H1 (cell line): ENCODE measurements at regions of chr17 and their contacts with region 1.

Region 1: GRCh38 chr17:63478791-63479494 is 2.1 kb downstream of the ACE start:
- DNase-seq: peak; percentile 65 to 91
- H3K4me3 ChIP-seq: no peak overlapping the region
- H3K27ac ChIP-seq: no peak overlapping the region
- H3K4me1 ChIP-seq: peaks cover 0 to 22% (median 17%) of the 10 kb centered on the region in 4 experiments; a peak in 6 of 7 replicates
- H3K27me3 ChIP-seq: peaks cover 0 to 27% (median 18%) of the 10 kb centered on the region in 4 experiments; a peak in 5 of 7 replicates
- CTCF ChIP-seq: peak; percentile 96 to 99 (median 98)
- EP300 ChIP-seq: no peak
- POLR2A ChIP-seq: no peak
- RAD21 ChIP-seq: peak; percentile 79 to 88

Region 2: DNA sequence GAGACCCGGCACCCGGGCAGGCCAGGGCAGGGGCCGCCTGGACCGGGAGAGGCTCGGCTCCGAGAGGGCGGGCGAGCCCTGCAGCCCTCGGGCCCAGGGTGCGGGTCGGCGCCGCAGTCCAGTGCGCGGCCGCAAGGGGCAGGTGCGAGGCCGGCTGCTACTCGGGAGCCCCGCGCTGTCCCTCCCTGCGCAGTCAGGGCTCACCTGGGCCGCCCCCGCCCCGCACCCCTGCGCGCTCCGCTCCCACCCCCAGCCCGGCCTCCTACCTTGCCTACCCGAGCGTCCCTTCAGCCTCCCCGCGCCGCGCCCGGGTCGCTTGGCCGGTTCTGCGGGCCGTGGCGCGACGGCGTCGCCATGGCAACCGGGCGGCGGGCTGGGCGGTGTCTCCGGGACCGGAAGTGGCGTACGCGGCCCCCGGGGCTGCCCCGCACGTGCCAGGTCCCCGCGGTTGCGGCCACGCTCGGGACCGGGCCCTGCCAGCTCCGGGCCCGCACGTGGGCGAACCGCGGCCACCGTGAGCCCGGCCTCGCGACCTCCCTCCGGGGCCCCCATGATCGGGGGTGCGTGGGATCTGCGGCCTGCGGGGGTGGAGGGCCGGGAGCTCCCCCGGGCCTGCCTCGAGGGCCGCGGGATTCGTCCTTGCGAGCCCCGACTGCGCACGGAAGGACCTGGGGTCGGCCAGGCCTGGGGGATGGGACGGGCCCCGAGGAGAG is 32.8 kb before region 1 on chr17 and contains the start of gene CYB561:
- CTCF ChIA-PET with region 1: interaction called, 758 read pairs
- POLR2A ChIA-PET with region 1: interaction called, 24 read pairs
- DNase-seq: peak in 1 of 2 experiments; percentile 92
- H3K4me3 ChIP-seq: peak within 1 kb of the TSS; percentile 49 to 74 (median 55)
- H3K27ac ChIP-seq: no peak within 1 kb of the TSS; the same call in 1 of the 2 replicates
- H3K4me1 ChIP-seq: peaks cover 0 to 20% (median 10%) of the 10 kb centered on the region in 4 experiments; a peak in 6 of 7 replicates
- H3K27me3 ChIP-seq: peaks cover 0 to 10% (median 2%) of the 10 kb centered on the region in 4 experiments; a peak in 2 of 7 replicates
- CTCF ChIP-seq: peak; percentile 56 to 86 (median 68)
- EP300 ChIP-seq: no peak
- POLR2A ChIP-seq: peak in 1 of 2 experiments; percentile 37; a peak in 1 of 3 replicates
- RAD21 ChIP-seq: peak; percentile 20 to 39; a peak in 2 of 4 replicates
- total RNA-seq, gene CYB561: 23.4 and 26.0 TPM in 2 replicates

Region 3: DNA sequence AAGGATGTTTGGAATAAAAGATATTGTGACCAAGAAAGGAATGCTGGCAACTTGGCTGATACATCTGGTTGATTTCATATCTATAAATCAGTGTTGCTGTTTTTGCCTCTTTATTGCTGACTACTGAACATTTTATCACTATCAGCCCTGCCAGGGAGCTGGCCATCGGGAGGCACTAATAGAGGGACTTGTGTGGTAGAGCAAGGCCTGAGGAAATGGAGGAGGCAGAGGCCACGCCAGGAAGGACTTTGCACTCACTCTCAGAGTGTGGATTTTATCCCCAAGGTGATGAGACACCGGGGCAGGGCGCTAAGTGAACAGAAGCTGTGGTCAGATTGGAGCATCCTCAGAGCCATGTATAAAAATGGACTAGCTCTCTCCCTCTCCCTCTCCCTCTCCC is 23.5 kb before region 1 on chr17:
- CTCF ChIA-PET with region 1: interaction called, 758 read pairs
- POLR2A ChIA-PET with region 1: no interaction called
- DNase-seq: no peak
- H3K4me3 ChIP-seq: no peak overlapping the region
- H3K27ac ChIP-seq: no peak overlapping the region
- H3K4me1 ChIP-seq: peaks cover 0 to 3% (median 0%) of the 10 kb centered on the region in 4 experiments; a peak in 1 of 7 replicates
- H3K27me3 ChIP-seq: no peaks in the 10 kb centered on the region; a peak in 1 of 7 replicates
- CTCF ChIP-seq: no peak
- EP300 ChIP-seq: no peak
- POLR2A ChIP-seq: no peak
- RAD21 ChIP-seq: no peak

Region 4: GRCh38 chr17:63490321-63490720 is 11.4 kb after region 1 on chr17:
- CTCF ChIA-PET with region 1: interaction called, 66 read pairs
- POLR2A ChIA-PET with region 1: interaction called, 3 read pairs
- DNase-seq: no peak
- H3K4me3 ChIP-seq: no peak overlapping the region
- H3K27ac ChIP-seq: no peak overlapping the region
- H3K4me1 ChIP-seq: peaks cover 0 to 3% (median 0%) of the 10 kb centered on the region in 4 experiments; a peak in 1 of 7 replicates
- H3K27me3 ChIP-seq: peaks cover 0 to 4% (median 0%) of the 10 kb centered on the region in 4 experiments; a peak in 1 of 7 replicates
- CTCF ChIP-seq: peak; percentile 8 to 44 (median 41); a peak in 3 of 4 replicates
- EP300 ChIP-seq: no peak
- POLR2A ChIP-seq: no peak
- RAD21 ChIP-seq: peak; percentile 30 to 33

Region 5: DNA sequence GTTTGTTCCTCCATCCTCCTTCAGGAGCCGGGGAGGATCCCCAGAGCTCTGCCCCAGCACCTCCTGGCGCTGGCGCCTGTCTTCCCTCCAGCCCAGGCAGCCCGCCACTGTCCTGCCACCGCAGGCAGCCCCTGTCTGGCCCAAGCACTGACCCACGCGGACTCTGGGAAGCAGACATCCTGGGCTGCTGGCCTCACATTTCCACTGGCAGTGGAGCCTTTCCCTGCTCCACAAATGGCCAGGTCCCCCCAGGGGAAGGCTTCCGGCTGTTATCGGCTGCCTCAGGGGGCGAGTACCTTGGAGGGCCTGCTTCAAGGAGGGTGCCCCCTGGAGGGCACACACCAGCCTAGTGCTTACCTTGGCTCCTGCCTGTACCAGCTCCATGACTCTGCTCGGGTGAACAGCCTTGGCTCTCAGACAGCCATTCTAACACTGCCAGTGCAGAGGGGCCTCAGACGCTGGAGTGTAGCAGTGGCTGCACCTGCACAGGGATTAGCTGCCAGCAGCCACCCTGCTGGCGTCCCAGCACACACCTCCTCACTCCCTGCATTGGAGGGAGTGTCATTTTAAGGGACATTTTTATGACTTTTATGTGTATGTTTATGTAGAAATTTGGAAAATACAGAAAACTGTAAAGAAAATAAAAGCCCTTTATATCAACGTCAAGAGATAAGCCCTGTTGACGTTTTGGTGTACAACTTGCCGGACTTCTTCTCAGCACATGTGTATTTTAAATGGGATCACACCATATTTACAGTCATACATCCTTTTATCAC is 19.0 kb after region 1 on chr17:
- CTCF ChIA-PET with region 1: interaction called, 66 read pairs
- POLR2A ChIA-PET with region 1: interaction called, 4 read pairs
- DNase-seq: peak in 1 of 2 experiments; percentile 81
- H3K4me3 ChIP-seq: no peak overlapping the region
- H3K27ac ChIP-seq: no peak overlapping the region
- H3K4me1 ChIP-seq: peaks cover 0 to 6% (median 0%) of the 10 kb centered on the region in 4 experiments; a peak in 1 of 7 replicates
- H3K27me3 ChIP-seq: no peaks in the 10 kb centered on the region
- CTCF ChIP-seq: peak; percentile 39 to 61 (median 51)
- EP300 ChIP-seq: no peak
- POLR2A ChIP-seq: no peak
- RAD21 ChIP-seq: peak; percentile 12 to 38; a peak in 3 of 4 replicates

Region 6: DNA sequence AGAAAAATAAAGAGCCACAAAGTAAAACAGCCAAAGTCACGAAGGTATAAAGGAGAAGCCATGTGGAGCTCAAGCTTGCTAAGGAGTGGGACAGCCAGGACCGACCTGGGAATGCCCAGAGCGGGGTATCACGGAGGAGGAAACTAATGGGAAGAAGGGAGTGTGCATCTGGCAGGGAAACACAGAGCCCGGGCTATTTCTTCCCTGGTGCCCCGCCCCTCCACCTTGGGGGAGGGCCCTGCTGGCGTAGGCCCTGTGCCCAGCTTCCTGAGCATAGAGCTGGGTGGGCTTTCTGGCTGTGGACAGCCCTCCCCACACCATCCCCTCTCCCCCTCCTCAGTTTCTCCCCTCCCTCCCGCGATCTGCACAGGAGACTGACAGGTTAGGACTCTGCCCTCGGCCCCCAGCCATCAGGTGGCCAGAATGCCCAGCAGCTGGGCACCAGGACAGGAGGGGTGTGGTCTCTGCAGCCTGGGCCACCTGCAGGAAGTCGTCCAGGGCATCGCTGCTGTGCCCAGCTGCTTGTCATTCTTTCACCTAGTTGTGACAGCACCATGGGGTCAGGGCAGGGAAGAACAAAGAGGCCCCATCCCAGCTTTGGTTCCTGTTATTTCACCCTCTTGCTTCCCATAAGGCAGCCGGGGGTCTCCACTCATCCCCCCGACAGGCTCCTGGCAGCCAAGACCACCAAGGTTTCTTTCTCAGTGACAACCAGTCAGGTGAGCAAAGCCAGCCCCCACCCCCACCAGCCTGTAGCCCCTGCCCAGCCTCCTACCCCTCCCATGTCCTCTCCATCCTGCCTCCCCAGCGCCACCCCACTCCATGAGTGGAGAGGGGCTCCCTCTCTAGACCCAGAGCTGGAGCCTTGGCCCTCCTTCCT is 64.2 kb after region 1 on chr17:
- CTCF ChIA-PET with region 1: interaction called, 17 read pairs
- POLR2A ChIA-PET with region 1: interaction called, 3 read pairs
- DNase-seq: no peak
- H3K4me3 ChIP-seq: no peak overlapping the region
- H3K27ac ChIP-seq: no peak overlapping the region
- H3K4me1 ChIP-seq: peaks cover 0 to 13% (median 3%) of the 10 kb centered on the region in 4 experiments; a peak in 5 of 7 replicates
- H3K27me3 ChIP-seq: peaks cover 0 to 16% (median 11%) of the 10 kb centered on the region in 4 experiments; a peak in 5 of 7 replicates
- CTCF ChIP-seq: no peak
- EP300 ChIP-seq: no peak
- POLR2A ChIP-seq: no peak
- RAD21 ChIP-seq: no peak